Activated CD4-positive, alpha-beta memory T cell treated with anti-CD3 and anti-CD28 coated beads for 36 hours (primary cell): ENCODE measurements at regions of chr11 and their contacts with region 1.

Region 1: GRCh38 chr11:74492974-74493790 is at the start of gene LIPT2:
- DNase-seq: peak; percentile 99
- H3K4me3 Mint-ChIP-seq: peak within 1 kb of the TSS; percentile 81
- H3K27ac Mint-ChIP-seq: peak within 1 kb of the TSS; percentile 91
- H3K4me1 Mint-ChIP-seq: peaks cover 22% of the 10 kb centered on the region
- H3K27me3 Mint-ChIP-seq: no peaks in the 10 kb centered on the region
- total RNA-seq, gene LIPT2: 3.0 to 3.3 TPM

Region 2: DNA sequence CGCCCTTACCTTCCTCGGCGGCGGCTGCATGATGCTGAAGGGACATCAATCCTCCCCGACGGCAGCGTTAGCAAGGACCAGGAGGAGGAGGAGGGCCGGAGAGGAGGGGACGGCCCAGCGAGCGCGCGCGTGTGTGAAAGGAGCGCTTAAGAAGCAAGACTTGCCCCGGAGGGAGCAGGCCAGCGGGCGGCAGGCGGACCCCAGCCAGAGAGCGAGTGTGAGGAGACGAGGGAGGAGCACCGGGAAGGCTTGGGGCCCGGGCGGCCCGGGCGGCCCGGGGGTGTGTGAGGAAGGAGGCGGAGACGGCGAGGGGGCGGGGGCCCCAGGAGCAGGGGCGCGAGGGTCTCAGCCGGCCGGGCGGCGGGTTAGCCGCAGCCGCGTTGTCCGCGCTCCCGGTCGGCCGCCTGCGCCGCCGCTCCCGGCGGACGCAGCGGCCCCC is 1351.3 kb before region 1 on chr11:
- CTCF ChIA-PET with region 1: no interaction called
- POLR2A ChIA-PET with region 1: no interaction called
- intact Hi-C with region 1: loop called (anchors 5 kb)
- DNase-seq: peak; percentile 65
- H3K4me3 Mint-ChIP-seq: peak overlapping the region; percentile 90
- H3K27ac Mint-ChIP-seq: peak overlapping the region; percentile 88
- H3K4me1 Mint-ChIP-seq: peaks cover 36% of the 10 kb centered on the region
- H3K27me3 Mint-ChIP-seq: no peaks in the 10 kb centered on the region

Region 3: DNA sequence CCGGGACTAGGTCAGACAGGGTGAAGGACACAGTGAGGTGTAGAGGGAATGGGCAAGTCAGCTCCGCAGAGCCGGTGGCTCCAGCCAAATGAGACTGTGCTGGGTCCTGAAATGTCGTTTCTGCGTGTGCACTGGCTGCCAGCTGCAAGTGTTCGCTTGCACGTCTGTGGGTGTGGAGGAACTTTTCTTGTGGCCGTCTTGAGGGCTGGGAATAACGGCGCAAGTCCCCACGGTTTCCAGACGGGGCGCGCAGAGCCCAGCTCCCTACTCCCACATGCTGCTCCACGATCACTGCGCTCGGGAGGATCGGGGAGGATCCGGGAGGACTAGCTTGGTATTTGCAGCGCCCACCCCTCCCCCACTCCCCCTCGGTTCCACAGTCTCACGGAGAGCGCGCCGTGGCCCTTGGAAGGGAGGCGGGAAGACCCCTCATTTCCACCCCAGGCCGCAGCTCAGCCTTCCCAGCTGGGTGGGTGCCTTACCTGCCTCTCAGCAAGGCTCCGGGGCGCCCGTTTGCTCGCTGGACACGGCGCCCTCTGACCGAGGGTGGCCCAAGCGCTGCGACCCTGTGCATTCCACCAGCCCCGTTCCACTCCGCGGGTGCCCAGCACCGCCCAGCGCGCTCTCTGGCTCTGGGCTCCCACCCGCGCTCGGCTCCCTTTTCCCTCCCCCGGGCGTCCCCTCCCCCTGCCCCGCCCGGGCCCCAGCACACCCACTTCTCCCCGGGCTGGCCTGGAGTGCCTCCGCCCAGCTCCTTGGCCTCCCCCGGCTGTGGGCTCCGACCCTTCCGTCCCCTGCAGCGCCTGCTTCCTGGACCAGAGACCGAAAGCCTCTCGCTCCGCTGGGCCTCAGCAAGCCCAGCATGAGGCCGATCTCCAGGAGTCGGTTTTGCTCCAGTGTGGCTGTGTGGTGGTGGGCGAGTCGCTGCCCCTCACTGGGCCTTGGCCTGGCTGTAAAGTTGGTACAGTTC is 26.0 kb before region 1 on chr11 and contains the start of gene KCNE3:
- CTCF ChIA-PET with region 1: no interaction called
- POLR2A ChIA-PET with region 1: no interaction called
- intact Hi-C with region 1: no loop called
- DNase-seq: no peak
- H3K4me3 Mint-ChIP-seq: no peak within 1 kb of the TSS
- H3K27ac Mint-ChIP-seq: no peak within 1 kb of the TSS
- H3K4me1 Mint-ChIP-seq: peaks cover 6% of the 10 kb centered on the region
- H3K27me3 Mint-ChIP-seq: peaks cover 35% of the 10 kb centered on the region
- total RNA-seq, gene KCNE3: not detected

Region 4: GRCh38 chr11:74559110-74559933 is 66.1 kb after region 1 on chr11:
- CTCF ChIA-PET with region 1: no interaction called
- POLR2A ChIA-PET with region 1: no interaction called
- intact Hi-C with region 1: no loop called
- DNase-seq: no peak
- H3K4me3 Mint-ChIP-seq: no peak overlapping the region
- H3K27ac Mint-ChIP-seq: no peak overlapping the region
- H3K4me1 Mint-ChIP-seq: no peaks in the 10 kb centered on the region
- H3K27me3 Mint-ChIP-seq: peaks cover 6% of the 10 kb centered on the region

Region 5: GRCh38 chr11:74570266-74571061 is 77.3 kb after region 1 on chr11:
- CTCF ChIA-PET with region 1: interaction called, 10 read pairs
- POLR2A ChIA-PET with region 1: no interaction called
- intact Hi-C with region 1: loop called (anchors 2 kb)
- DNase-seq: peak; percentile 46
- H3K4me3 Mint-ChIP-seq: no peak overlapping the region
- H3K27ac Mint-ChIP-seq: no peak overlapping the region
- H3K4me1 Mint-ChIP-seq: no peaks in the 10 kb centered on the region
- H3K27me3 Mint-ChIP-seq: peaks cover 11% of the 10 kb centered on the region

Region 6: GRCh38 chr11:74592441-74593362 is 99.5 kb after region 1 on chr11 and contains the start of gene POLD3:
- CTCF ChIA-PET with region 1: interaction called, 3 read pairs
- POLR2A ChIA-PET with region 1: interaction called, 11 read pairs
- intact Hi-C with region 1: loop called (anchors 1 kb)
- DNase-seq: peak; percentile 97
- H3K4me3 Mint-ChIP-seq: peak within 1 kb of the TSS; percentile 98
- H3K27ac Mint-ChIP-seq: peak within 1 kb of the TSS; percentile 96
- H3K4me1 Mint-ChIP-seq: peaks cover 35% of the 10 kb centered on the region
- H3K27me3 Mint-ChIP-seq: no peaks in the 10 kb centered on the region
- total RNA-seq, gene POLD3: 60.8 to 61.4 TPM

Region 7: GRCh38 chr11:74748211-74749127 is 255.3 kb after region 1 on chr11 and contains the start of gene RNF169:
- CTCF ChIA-PET with region 1: no interaction called
- POLR2A ChIA-PET with region 1: interaction called, 4 read pairs
- intact Hi-C with region 1: loop called (anchors 10 kb)
- DNase-seq: peak; percentile 94
- H3K4me3 Mint-ChIP-seq: peak within 1 kb of the TSS; percentile 91
- H3K27ac Mint-ChIP-seq: peak within 1 kb of the TSS; percentile 74
- H3K4me1 Mint-ChIP-seq: peaks cover 33% of the 10 kb centered on the region
- H3K27me3 Mint-ChIP-seq: no peaks in the 10 kb centered on the region
- total RNA-seq, gene RNF169: 14.3 to 14.9 TPM